Ovary (tissue), 10 donors: ENCODE measurements at regions of chr1 and their contacts with region 1.

Region 1: GRCh38 chr1:11198851-11199594 is 9.9 kb downstream of the ANGPTL7 start:
- DNase-seq: no peak
- H3K4me3 ChIP-seq: no peak overlapping the region
- H3K27ac ChIP-seq: no peak overlapping the region
- H3K4me1 ChIP-seq: no peaks in the 10 kb centered on the region
- H3K27me3 ChIP-seq: no peaks in the 10 kb centered on the region
- CTCF ChIP-seq: no peak
- EP300 ChIP-seq: no peak
- POLR2A ChIP-seq: no peak

Region 2: DNA sequence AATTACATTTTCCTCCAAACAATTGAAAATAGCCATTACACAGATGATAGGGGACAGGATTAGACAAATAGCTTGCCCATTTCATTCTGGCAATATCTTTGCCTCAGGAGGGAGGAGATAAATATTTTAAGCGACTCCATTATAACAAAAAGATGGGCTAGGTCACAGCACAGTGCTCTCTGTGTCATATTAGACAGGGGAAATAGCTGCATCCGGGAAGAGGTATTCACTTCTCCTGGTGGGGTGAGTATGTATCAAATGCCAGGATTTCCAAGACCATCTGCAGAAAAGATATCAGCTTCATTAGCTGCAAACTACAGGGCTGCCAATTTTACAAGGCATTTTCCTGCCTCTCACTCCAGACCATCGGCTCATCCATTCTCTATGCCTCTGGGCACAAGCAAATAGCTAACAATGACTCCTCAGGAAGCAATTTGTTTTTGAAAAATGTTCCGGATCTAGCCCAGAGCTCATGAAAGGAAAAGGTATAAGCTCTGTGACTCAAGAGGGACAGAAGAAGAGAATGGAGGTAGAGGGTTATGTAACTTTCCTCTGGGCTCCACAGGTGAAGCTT is 51.7 kb before region 1 on chr1:
- intact Hi-C with region 1: loop called in 1 of 4 experiments (anchors 2 kb)
- DNase-seq: no peak
- H3K4me3 ChIP-seq: no peak overlapping the region
- H3K27ac ChIP-seq: no peak overlapping the region
- H3K4me1 ChIP-seq: peaks cover 15% of the 10 kb centered on the region
- H3K27me3 ChIP-seq: no peaks in the 10 kb centered on the region
- CTCF ChIP-seq: no peak
- EP300 ChIP-seq: no peak
- POLR2A ChIP-seq: no peak